Endothelial cell of umbilical vein (primary cell): ENCODE measurements at regions of chr9 and their contacts with region 1.

Region 1: DNA sequence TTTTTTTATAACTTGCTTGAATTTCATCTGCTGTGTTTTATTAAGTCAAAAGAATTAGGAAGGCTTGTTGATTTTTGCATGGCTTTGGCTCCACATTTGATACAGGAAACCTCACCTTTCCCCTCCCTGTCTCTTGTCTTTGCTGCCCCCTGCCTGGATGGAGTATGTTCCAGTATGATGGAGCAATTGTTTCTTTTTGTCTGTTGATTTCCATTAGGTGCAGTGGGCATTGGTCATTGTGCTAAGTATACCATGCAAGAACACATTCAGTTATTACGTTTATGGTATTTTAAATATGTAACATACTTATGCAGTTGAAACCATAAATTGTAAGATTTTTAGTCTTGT is 19.6 kb downstream of the TJP2 start:
- DNase-seq: peak; percentile 35
- H3K4me3 ChIP-seq: no peak overlapping the region
- H3K27ac ChIP-seq: no peak overlapping the region
- H3K4me1 ChIP-seq: peaks cover 14% of the 10 kb centered on the region
- H3K27me3 ChIP-seq: no peaks in the 10 kb centered on the region
- CTCF ChIP-seq: no peak
- POLR2A ChIP-seq: no peak

Region 2: GRCh38 chr9:69056191-69056815 is 137.4 kb before region 1 on chr9:
- CTCF ChIA-PET with region 1: interaction called, 281 read pairs
- POLR2A ChIA-PET with region 1: interaction called, 4 read pairs
- dilution Hi-C with region 1: loop called (anchors 10 kb)
- intact Hi-C with region 1: loop called (anchors 1 kb)
- DNase-seq: no peak
- H3K4me3 ChIP-seq: no peak overlapping the region
- H3K27ac ChIP-seq: no peak overlapping the region
- H3K4me1 ChIP-seq: peaks cover 3% of the 10 kb centered on the region
- H3K27me3 ChIP-seq: no peaks in the 10 kb centered on the region
- CTCF ChIP-seq: no peak
- POLR2A ChIP-seq: no peak

Region 3: GRCh38 chr9:69121828-69122548 is 71.7 kb before region 1 on chr9:
- CTCF ChIA-PET with region 1: interaction called, 44 read pairs
- POLR2A ChIA-PET with region 1: interaction called, 5 read pairs
- dilution Hi-C with region 1: no loop called
- intact Hi-C with region 1: loop called (anchors 1 kb)
- DNase-seq: peak; percentile 81
- H3K4me3 ChIP-seq: peak overlapping the region; percentile 69 to 83 (median 75)
- H3K27ac ChIP-seq: peak overlapping the region; percentile 69
- H3K4me1 ChIP-seq: peaks cover 21% of the 10 kb centered on the region
- H3K27me3 ChIP-seq: no peaks in the 10 kb centered on the region
- CTCF ChIP-seq: no peak
- POLR2A ChIP-seq: no peak

Region 4: GRCh38 chr9:69143291-69143690 is 50.4 kb before region 1 on chr9:
- CTCF ChIA-PET with region 1: interaction called, 27 read pairs
- POLR2A ChIA-PET with region 1: no interaction called
- dilution Hi-C with region 1: no loop called
- intact Hi-C with region 1: no loop called
- DNase-seq: peak; percentile 88
- H3K4me3 ChIP-seq: peak overlapping the region in 1 of 3 experiments; percentile 41
- H3K27ac ChIP-seq: peak overlapping the region; percentile 74
- H3K4me1 ChIP-seq: peaks cover 24% of the 10 kb centered on the region
- H3K27me3 ChIP-seq: no peaks in the 10 kb centered on the region
- CTCF ChIP-seq: no peak
- POLR2A ChIP-seq: no peak

Region 5: DNA sequence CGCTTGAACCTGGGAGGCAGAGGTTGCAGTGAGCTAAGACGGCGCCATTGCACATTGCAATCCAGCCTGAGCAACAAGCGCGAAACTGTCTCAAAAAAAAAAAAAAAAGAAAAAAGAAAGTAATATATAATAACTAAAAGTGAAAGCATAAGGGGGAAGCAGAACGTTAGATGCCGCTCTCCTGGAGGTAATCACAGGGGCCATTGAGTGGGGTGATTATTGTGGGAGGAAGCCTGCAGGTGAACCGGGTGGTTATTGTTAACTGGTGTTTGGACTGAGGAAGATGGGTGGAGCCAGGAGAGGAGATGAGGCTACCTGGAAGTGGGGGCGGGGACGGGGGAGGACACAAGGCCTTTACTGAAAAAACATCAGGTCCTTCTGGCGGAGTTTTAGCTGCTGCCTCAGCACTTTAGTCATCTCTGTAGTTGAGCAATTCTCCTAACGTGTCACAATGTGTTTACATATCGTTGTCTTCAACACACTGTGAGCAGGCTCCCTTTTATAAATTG is 24.9 kb before region 1 on chr9:
- CTCF ChIA-PET with region 1: interaction called, 23 read pairs
- POLR2A ChIA-PET with region 1: no interaction called
- dilution Hi-C with region 1: no loop called
- intact Hi-C with region 1: no loop called
- DNase-seq: no peak
- H3K4me3 ChIP-seq: no peak overlapping the region
- H3K27ac ChIP-seq: no peak overlapping the region
- H3K4me1 ChIP-seq: peaks cover 35% of the 10 kb centered on the region
- H3K27me3 ChIP-seq: no peaks in the 10 kb centered on the region
- CTCF ChIP-seq: no peak
- POLR2A ChIP-seq: no peak

Region 6: DNA sequence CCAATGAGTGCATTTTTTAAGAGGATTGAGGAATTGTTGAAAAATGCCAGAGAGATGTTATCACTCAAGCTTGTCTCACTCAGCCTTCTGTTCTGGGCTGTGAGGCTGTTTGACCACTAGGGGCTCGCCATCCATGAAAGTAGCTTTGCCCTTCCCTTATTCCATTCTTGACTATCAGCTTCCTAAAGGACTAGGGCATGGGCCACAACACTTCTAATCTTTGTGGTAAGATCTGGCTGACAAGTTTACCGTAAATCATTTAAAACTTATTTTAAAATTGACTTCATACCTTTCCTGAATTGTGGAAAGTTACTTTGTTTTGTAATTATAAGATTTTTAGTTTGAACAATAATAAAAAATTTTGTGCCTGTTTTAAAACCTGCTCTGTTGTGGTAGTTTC is 29.9 kb after region 1 on chr9:
- CTCF ChIA-PET with region 1: interaction called, 17 read pairs
- POLR2A ChIA-PET with region 1: no interaction called
- dilution Hi-C with region 1: no loop called
- intact Hi-C with region 1: no loop called
- DNase-seq: peak; percentile 74
- H3K4me3 ChIP-seq: no peak overlapping the region
- H3K27ac ChIP-seq: no peak overlapping the region
- H3K4me1 ChIP-seq: no peaks in the 10 kb centered on the region
- H3K27me3 ChIP-seq: no peaks in the 10 kb centered on the region
- CTCF ChIP-seq: peak; percentile 85
- POLR2A ChIP-seq: no peak

Region 7: GRCh38 chr9:69317894-69318293 is 124.2 kb after region 1 on chr9:
- CTCF ChIA-PET with region 1: no interaction called
- POLR2A ChIA-PET with region 1: no interaction called
- dilution Hi-C with region 1: no loop called
- intact Hi-C with region 1: no loop called
- DNase-seq: no peak
- H3K4me3 ChIP-seq: no peak overlapping the region
- H3K27ac ChIP-seq: no peak overlapping the region
- H3K4me1 ChIP-seq: no peaks in the 10 kb centered on the region
- H3K27me3 ChIP-seq: peaks cover 3 to 13% of the 10 kb centered on the region in 2 experiments
- CTCF ChIP-seq: no peak
- POLR2A ChIP-seq: no peak